ENCODE measurements at regions of chr19 and their contacts with region 1.

Region 1: GRCh38 chr19:19404879-19405860 is at the start of gene GATAD2A:
- DNase-seq: peak; percentile 97
- H3K4me3 ChIP-seq: peak within 1 kb of the TSS; percentile 88 to 99 (median 98)
- H3K27ac ChIP-seq: peak within 1 kb of the TSS; percentile 86 to 93 (median 89)
- H3K4me1 ChIP-seq: peaks cover 0 to 51% (median 38%) of the 10 kb centered on the region in 4 donors
- H3K27me3 ChIP-seq: no peaks in the 10 kb centered on the region
- CTCF ChIP-seq: peak in 2 of 4 experiments; percentile 10 to 18
- EP300 ChIP-seq: no peak
- POLR2A ChIP-seq: no peak
- total RNA-seq, gene GATAD2A: 18.5 to 138 (median 25.5) TPM

Region 2: GRCh38 chr19:19366612-19367396 is 38.4 kb before region 1 on chr19:
- intact Hi-C with region 1: loop called (anchors 5 kb)
- DNase-seq: no peak
- H3K4me3 ChIP-seq: no peak overlapping the region
- H3K27ac ChIP-seq: peak overlapping the region in 3 of 4 donors; percentile 25 to 33 (median 27)
- H3K4me1 ChIP-seq: peaks cover 0 to 12% (median 5%) of the 10 kb centered on the region in 4 donors
- H3K27me3 ChIP-seq: no peaks in the 10 kb centered on the region
- CTCF ChIP-seq: peak; percentile 88 to 96 (median 93)
- EP300 ChIP-seq: no peak
- POLR2A ChIP-seq: no peak

Region 3: DNA sequence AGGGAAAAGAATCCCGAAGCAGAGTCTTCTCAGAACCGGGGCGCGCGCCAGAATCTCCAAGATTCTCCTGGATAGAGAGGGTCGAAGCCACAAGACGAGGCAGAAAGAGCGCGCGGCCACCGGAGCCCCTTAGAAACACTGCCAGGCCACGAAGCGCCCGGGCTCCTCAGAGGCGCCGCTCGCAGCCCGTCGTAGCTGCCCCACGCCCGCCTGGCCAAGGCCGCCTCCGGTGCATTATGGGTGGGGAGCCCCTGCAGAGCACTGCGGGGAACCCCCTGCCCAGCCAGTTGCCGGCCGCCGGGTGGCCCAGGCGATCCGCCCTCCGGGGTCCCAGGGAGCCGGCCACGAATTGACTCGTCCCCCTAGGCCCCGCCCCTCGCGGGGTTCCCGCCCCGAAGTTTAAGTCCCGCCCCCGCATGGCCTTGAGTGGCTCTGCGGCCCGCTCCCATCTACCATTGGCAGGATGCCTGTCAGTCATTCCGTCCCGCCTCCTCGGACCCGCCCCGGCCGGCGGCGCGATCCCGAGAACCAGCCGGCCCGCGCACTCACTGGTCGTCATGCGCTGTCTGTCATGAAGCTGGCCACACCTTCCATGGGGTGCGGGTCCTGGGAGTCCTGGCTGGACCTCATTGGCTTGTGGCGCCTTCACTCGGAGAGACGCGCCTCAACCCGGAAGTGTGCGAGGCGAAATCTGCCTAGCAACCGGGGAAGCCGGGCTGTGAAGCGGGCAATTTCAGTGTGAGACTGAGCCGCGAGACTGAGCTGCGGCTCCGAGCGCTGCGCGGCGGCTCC is 19.9 kb before region 1 on chr19:
- intact Hi-C with region 1: loop called (anchors 1 kb)
- DNase-seq: peak; percentile 100
- H3K4me3 ChIP-seq: peak overlapping the region; percentile 61 to 93 (median 80)
- H3K27ac ChIP-seq: peak overlapping the region; percentile 78 to 89 (median 86)
- H3K4me1 ChIP-seq: peaks cover 0 to 43% (median 28%) of the 10 kb centered on the region in 4 donors
- H3K27me3 ChIP-seq: no peaks in the 10 kb centered on the region
- CTCF ChIP-seq: no peak
- EP300 ChIP-seq: no peak
- POLR2A ChIP-seq: peak; percentile 50 to 54

Region 4: GRCh38 chr19:19459707-19460251 is 54.6 kb after region 1 on chr19:
- intact Hi-C with region 1: loop called (anchors 5 kb)
- DNase-seq: no peak
- H3K4me3 ChIP-seq: no peak overlapping the region
- H3K27ac ChIP-seq: peak overlapping the region; percentile 62 to 82 (median 74)
- H3K4me1 ChIP-seq: peaks cover 0 to 69% (median 65%) of the 10 kb centered on the region in 4 donors
- H3K27me3 ChIP-seq: no peaks in the 10 kb centered on the region
- CTCF ChIP-seq: no peak
- EP300 ChIP-seq: no peak
- POLR2A ChIP-seq: no peak

Region 5: DNA sequence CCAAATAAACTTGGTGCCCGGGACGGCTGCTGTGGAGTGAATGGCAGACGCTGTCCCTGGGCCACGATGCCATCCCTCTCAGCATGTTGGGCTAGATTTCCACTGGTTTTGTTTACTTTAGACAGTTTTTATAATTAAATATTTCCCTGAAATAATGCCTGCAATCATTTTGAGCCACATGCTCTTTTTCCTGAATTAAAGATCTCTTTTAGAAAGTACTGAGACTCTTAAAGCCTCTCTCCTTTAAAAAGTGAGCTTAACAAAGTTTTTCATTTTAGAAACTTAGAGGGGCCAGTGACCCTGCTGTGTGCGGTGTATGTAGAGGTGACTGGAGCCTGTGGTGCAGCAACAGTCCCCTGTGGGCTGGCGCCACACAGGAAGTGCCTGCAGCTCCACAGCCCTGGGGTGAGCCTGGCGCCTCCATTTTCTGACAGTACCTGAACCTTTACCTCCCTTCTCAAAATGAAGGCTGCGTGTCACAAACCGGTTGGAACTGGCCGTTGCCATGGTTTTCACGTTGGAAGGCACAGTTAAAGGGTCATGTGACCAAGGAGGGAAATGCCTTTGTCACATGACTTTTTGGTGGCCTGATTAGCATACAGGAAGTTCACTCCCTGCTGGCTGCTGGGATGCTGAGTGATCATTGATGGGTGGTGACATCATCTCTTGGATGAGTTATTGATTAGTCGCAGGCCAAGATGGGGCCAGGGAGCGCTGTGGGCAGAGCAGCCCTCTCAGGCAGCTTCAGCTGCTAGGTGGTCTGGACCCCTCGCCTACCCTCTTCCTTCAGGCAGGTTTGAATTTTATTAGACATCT is 83.9 kb after region 1 on chr19:
- intact Hi-C with region 1: loop called (anchors 5 kb)
- DNase-seq: peak; percentile 88
- H3K4me3 ChIP-seq: no peak overlapping the region
- H3K27ac ChIP-seq: peak overlapping the region; percentile 58 to 70 (median 60)
- H3K4me1 ChIP-seq: peaks cover 0 to 41% (median 30%) of the 10 kb centered on the region in 4 donors
- H3K27me3 ChIP-seq: no peaks in the 10 kb centered on the region
- CTCF ChIP-seq: no peak
- EP300 ChIP-seq: no peak
- POLR2A ChIP-seq: no peak

Region 6: GRCh38 chr19:19515764-19516519 is 110.8 kb after region 1 on chr19 and contains the start of gene NDUFA13:
- intact Hi-C with region 1: no loop called
- DNase-seq: peak; percentile 96
- H3K4me3 ChIP-seq: peak within 1 kb of the TSS; percentile 72 to 78 (median 73)
- H3K27ac ChIP-seq: peak within 1 kb of the TSS; percentile 85 to 90 (median 88)
- H3K4me1 ChIP-seq: peaks cover 0 to 52% (median 46%) of the 10 kb centered on the region in 4 donors
- H3K27me3 ChIP-seq: no peaks in the 10 kb centered on the region
- CTCF ChIP-seq: no peak
- EP300 ChIP-seq: no peak
- POLR2A ChIP-seq: peak; percentile 71 to 81
- total RNA-seq, gene NDUFA13: 31.3 to 110 (median 55.4) TPM

Measured in sigmoid colon (tissue), 7 donors.